Panc1 (cell line): ENCODE measurements at regions of chr6 and their contacts with region 1.

Region 1: DNA sequence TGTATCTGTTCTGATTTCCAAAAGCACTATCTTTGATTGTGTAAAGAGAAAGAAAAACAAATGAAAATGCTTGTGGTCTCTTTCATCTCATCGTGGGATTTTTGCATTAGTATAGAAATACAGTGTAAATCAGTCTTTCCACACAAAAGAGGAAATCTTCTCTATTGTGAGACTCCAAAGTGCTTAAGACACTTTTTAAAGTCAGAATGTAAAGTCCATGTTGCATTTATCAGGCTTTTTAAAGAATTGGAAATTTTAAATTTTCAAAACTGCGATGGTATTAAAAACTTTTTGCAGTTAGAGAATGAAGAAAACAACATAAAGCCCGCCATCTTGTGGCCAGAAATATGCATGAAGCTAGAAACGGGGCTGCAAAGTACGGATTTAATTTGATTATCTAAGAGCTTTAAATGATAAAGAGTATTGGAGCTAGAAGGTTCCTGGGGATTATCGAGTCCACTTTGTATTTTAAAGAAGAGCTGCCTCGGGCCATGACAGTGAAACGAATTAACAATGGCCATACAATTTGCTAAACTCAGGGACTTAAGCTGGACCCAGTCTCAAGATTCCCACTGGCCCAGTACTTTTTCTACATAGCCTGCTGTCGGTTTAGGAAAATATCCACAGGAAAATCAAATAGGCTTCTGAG is 339.6 kb downstream of the ARHGAP18 start:
- DNase-seq: peak; percentile 20
- ATAC-seq: peak; percentile 65; the same call in 1 of the 2 replicates
- H3K4me3 ChIP-seq: no peak overlapping the region
- H3K27ac ChIP-seq: peak overlapping the region; percentile 74; the same call in 1 of the 2 replicates
- H3K4me1 ChIP-seq: peaks cover 16% of the 10 kb centered on the region; the same call in 1 of the 2 replicates
- H3K27me3 ChIP-seq: no peaks in the 10 kb centered on the region
- CTCF ChIP-seq: peak; percentile 74

Region 2: GRCh38 chr6:129251669-129252376 is 118.6 kb before region 1 on chr6:
- CTCF ChIA-PET with region 1: no interaction called
- POLR2A ChIA-PET with region 1: no interaction called
- in situ Hi-C with region 1: no loop called
- intact Hi-C with region 1: loop called (anchors 10 kb)
- DNase-seq: peak; percentile 53
- ATAC-seq: peak; percentile 74; the same call in 1 of the 2 replicates
- H3K4me3 ChIP-seq: no peak overlapping the region
- H3K27ac ChIP-seq: no peak overlapping the region
- H3K4me1 ChIP-seq: peaks cover 5% of the 10 kb centered on the region; the same call in 1 of the 2 replicates
- H3K27me3 ChIP-seq: no peaks in the 10 kb centered on the region
- CTCF ChIP-seq: peak; percentile 90